AG04449 (cell line): ENCODE measurements at regions of chr22 and their contacts with region 1.

Region 1: GRCh38 chr22:32080904-32081303 is 37.8 kb downstream of the SLC5A1 start:
- DNase-seq: no peak
- H3K4me3 ChIP-seq: no peak overlapping the region
- CTCF ChIP-seq: peak; percentile 57

Region 2: GRCh38 chr22:31977141-31977841 is 103.6 kb before region 1 on chr22:
- CTCF ChIA-PET with region 1: interaction called, 175 read pairs
- POLR2A ChIA-PET with region 1: no interaction called
- DNase-seq: no peak
- H3K4me3 ChIP-seq: no peak overlapping the region
- CTCF ChIP-seq: peak; percentile 81

Region 3: DNA sequence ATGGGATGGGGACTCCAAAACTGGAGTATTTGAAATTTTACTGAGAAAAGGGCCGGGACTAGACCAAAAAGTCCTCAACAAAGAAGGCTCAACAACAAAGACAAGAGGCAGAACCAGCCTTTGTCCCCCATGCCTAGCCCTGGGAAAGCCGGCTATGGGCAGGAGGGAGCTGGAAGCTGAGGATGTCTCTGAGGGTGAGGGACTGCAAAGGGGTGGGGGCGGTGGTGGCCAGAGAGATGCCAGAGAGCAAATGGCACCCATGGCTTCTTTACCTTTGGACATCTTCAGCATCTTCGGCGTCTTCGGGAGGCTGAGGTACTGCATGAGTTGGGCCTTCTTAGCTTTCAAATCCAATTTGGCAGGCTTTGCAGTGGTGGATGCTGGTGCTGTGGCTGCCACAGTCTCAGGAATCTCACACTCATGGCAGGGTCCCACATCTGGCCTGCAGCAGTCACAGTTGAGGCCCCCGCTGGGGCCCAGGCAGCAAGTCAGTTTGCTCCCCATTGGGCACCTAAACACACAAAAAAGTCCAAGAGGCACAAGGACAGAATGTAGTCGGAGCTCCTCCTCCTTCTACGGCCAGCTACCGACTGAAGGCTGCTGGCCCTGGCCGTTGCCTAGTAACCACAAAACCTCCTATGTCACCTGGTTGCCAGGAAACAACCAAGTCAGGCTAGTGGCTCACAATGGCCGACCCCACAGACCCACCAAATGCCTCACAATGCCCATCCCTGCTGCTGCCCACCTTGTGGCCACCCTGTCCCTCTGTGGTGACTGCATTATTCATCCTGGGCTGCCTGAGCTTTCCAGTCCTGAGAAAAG is 78.0 kb after region 1 on chr22 and contains the start of gene C22orf42:
- CTCF ChIA-PET with region 1: no interaction called
- POLR2A ChIA-PET with region 1: no interaction called
- DNase-seq: no peak
- H3K4me3 ChIP-seq: no peak within 1 kb of the TSS
- CTCF ChIP-seq: no peak